A673 (cell line): ENCODE measurements at regions of chr12 and their contacts with region 1.

Region 1: DNA sequence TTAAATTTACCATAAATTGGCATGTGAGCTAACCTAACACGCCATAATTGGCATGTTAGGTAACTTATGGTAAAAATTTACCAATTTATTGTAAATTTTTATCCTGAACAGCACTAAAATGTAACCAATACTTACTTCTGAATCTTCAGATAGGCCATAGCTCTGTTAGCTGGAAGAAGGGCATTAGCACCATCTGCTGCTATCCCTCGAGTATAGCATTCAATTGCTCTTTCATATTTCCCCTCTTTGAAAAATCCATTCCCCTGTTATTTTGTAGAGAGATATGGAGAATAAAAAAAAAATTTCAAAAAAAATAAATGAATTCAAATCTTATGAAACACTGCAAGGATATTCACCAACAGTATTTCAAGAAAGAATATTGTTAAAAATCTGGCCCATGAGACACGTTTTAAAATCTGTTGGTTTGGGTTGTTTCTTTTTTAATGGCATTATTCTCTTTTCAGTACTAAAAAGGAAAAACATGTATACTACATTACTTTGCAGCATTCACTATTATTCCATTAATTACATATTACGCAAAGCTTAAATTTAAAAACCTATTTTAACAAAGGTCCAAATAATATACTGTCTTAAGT is 19.1 kb downstream of the RPAP3 start:
- DNase-seq: peak; percentile 52
- H3K4me3 ChIP-seq: no peak overlapping the region
- H3K27ac ChIP-seq: no peak overlapping the region
- H3K4me1 ChIP-seq: no peaks in the 10 kb centered on the region
- H3K27me3 ChIP-seq: no peaks in the 10 kb centered on the region
- CTCF ChIP-seq: peak; percentile 76

Region 2: DNA sequence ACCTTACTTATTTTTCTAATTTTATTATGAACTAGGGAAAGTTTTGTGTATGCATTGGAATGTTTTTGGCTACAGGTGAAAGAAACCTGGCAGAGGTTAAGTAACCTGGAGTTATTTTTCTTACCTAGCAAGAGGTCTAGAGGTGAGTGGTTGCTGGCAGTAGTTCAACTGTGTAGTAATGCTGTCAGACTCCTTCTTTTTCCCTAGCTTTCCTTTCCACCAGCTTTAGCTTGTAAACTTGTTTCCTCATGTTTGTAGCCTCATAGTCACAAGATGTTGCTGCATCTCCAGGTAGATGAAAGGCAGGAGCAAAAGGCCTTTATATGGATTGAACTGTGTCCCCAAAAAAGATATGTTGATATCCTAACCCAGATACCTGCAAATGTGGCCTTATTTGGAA is 501.9 kb before region 1 on chr12:
- CTCF ChIA-PET with region 1: no interaction called
- POLR2A ChIA-PET with region 1: no interaction called
- intact Hi-C with region 1: no loop called
- DNase-seq: no peak
- H3K4me3 ChIP-seq: no peak overlapping the region
- H3K27ac ChIP-seq: no peak overlapping the region
- H3K4me1 ChIP-seq: no peaks in the 10 kb centered on the region
- H3K27me3 ChIP-seq: no peaks in the 10 kb centered on the region
- CTCF ChIP-seq: no peak

Region 3: GRCh38 chr12:47236109-47236714 is 450.5 kb before region 1 on chr12:
- CTCF ChIA-PET with region 1: no interaction called
- POLR2A ChIA-PET with region 1: no interaction called
- intact Hi-C with region 1: no loop called
- DNase-seq: no peak
- H3K4me3 ChIP-seq: no peak overlapping the region
- H3K27ac ChIP-seq: no peak overlapping the region
- H3K4me1 ChIP-seq: no peaks in the 10 kb centered on the region
- H3K27me3 ChIP-seq: no peaks in the 10 kb centered on the region
- CTCF ChIP-seq: no peak

Region 4: DNA sequence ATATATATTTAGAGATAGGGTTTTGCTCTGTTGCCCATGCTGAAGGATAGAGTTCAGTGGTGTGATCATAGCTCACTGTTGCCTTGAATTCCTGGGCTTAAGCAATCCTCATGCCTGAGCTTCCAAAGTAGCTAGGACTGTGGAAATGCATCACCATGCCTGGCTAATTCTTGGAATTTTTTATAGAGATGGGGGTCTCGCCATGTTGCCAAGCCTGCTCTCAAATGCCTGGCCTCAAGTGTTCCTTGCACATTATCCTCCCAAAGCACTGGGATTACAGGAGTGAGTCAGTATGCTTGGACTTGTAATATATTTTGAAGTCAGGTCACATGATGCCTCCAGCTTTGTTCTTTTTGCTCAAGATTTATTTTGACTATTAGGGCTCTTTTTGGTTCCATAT is 158.9 kb before region 1 on chr12:
- CTCF ChIA-PET with region 1: no interaction called
- POLR2A ChIA-PET with region 1: no interaction called
- intact Hi-C with region 1: no loop called
- DNase-seq: peak; percentile 12
- H3K4me3 ChIP-seq: no peak overlapping the region
- H3K27ac ChIP-seq: no peak overlapping the region
- H3K4me1 ChIP-seq: no peaks in the 10 kb centered on the region
- H3K27me3 ChIP-seq: no peaks in the 10 kb centered on the region
- CTCF ChIP-seq: no peak

Region 5: GRCh38 chr12:47651368-47652254 is 35.1 kb before region 1 on chr12:
- CTCF ChIA-PET with region 1: interaction called, 10 read pairs
- POLR2A ChIA-PET with region 1: no interaction called
- intact Hi-C with region 1: loop called (anchors 5 kb)
- DNase-seq: peak; percentile 87
- H3K4me3 ChIP-seq: no peak overlapping the region
- H3K27ac ChIP-seq: peak overlapping the region; percentile 40
- H3K4me1 ChIP-seq: peaks cover 12% of the 10 kb centered on the region
- H3K27me3 ChIP-seq: no peaks in the 10 kb centered on the region
- CTCF ChIP-seq: peak; percentile 75

Region 6: DNA sequence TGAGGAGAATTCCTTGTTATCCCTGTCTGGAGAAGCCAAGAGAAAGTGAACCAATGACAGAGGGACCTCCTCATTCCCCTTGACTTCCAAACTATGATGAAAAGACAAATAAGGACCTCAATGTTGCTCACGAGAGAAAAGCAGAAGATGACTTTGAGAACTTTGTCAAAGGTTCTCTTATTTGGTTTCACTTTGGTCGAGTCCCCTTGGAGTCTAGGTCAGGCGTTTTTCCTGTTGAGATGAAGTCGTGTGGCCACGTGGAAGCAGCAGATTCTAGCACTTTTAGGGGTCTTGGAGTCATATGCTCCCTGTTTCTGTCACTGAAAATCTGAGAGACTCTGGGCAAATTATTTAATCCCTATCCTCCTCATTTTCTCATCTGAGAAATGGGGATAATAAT is 351.3 kb after region 1 on chr12:
- CTCF ChIA-PET with region 1: no interaction called
- POLR2A ChIA-PET with region 1: no interaction called
- intact Hi-C with region 1: no loop called
- DNase-seq: no peak
- H3K4me3 ChIP-seq: no peak overlapping the region
- H3K27ac ChIP-seq: no peak overlapping the region
- H3K4me1 ChIP-seq: no peaks in the 10 kb centered on the region
- H3K27me3 ChIP-seq: no peaks in the 10 kb centered on the region
- CTCF ChIP-seq: no peak